ENCODE measurements at regions of chr9 and their contacts with region 1.

Region 1: DNA sequence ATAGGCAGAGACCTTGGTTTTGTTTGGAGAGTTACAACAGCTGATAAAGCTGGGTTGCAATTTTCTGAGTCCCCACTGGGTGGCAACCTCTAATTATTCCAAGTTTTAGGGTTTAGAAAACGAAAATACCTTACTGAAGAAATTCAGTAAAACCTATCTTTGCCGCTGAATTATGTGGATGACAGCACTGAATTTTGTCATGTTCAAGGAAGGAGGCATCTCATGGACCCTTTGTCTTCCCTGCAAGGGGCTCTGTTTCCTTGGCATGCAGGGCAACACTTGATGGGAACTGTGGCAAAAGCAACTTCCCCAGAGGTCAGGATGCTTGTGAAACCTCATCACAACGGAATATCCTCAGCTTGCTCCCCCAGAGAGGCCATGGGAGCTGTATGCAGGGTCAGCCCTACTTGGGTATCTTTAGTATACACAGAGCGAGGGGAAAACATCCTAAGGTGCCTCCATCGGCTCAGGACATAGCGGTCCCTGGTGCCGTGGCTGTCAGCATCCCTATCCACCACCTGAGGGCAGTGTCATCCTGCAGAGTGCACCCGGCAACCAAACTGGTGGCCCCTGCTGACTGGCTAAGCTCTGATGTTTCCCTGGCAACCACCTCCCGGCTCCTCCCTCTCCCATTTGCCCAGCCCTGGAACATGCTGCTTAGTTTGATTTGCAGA is 123.1 kb downstream of the RXRA start:
- DNase-seq: peak; percentile 95
- H3K4me3 ChIP-seq: no peak overlapping the region
- H3K27ac ChIP-seq: no peak overlapping the region
- H3K4me1 ChIP-seq: peaks cover 7% of the 10 kb centered on the region
- H3K27me3 ChIP-seq: no peaks in the 10 kb centered on the region
- CTCF ChIP-seq: peak; percentile 90

Region 2: DNA sequence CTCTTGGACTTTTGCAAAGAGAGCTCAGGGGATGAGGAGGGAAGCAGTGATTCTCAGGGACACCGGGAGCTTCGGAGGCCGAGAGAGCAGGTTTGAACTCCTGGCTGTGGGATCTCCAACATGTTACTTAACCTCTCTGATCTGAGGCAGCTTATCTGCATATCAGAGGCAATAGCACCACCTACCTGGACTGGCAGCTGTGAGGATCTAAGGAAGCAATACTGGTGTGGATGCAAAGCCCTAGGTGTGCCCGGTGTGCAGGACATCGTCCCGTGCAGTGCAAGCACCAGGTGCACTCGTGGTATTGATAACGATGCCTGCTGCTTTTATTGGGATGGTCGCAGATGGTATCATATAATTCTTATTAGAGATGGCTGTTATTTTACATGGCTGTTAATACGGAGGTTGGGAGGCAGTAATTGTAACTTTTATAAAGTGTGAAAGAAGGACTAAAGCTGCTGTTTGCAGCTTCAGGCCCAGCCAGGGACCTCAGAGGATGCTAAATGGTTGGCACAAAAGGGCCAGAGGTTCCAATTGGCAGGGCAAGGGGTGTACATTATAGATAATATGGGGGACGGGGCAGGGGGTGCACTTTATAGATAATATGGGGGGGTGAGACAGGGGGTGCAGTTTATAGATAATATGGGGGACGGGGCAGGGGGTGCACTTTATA is 207.1 kb after region 1 on chr9:
- CTCF ChIA-PET with region 1: no interaction called
- POLR2A ChIA-PET with region 1: no interaction called
- intact Hi-C with region 1: loop called (anchors 2 kb)
- DNase-seq: no peak
- H3K4me3 ChIP-seq: no peak overlapping the region
- H3K27ac ChIP-seq: no peak overlapping the region
- H3K4me1 ChIP-seq: no peaks in the 10 kb centered on the region
- H3K27me3 ChIP-seq: no peaks in the 10 kb centered on the region
- CTCF ChIP-seq: peak; percentile 23; the same call in 1 of the 2 replicates

Region 3: GRCh38 chr9:134738869-134739659 is 289.7 kb after region 1 on chr9:
- CTCF ChIA-PET with region 1: interaction called, 14 read pairs
- POLR2A ChIA-PET with region 1: no interaction called
- intact Hi-C with region 1: loop called (anchors 1 kb)
- DNase-seq: peak; percentile 74
- H3K4me3 ChIP-seq: no peak overlapping the region
- H3K27ac ChIP-seq: no peak overlapping the region
- H3K4me1 ChIP-seq: no peaks in the 10 kb centered on the region
- H3K27me3 ChIP-seq: no peaks in the 10 kb centered on the region
- CTCF ChIP-seq: peak; percentile 85

Region 4: DNA sequence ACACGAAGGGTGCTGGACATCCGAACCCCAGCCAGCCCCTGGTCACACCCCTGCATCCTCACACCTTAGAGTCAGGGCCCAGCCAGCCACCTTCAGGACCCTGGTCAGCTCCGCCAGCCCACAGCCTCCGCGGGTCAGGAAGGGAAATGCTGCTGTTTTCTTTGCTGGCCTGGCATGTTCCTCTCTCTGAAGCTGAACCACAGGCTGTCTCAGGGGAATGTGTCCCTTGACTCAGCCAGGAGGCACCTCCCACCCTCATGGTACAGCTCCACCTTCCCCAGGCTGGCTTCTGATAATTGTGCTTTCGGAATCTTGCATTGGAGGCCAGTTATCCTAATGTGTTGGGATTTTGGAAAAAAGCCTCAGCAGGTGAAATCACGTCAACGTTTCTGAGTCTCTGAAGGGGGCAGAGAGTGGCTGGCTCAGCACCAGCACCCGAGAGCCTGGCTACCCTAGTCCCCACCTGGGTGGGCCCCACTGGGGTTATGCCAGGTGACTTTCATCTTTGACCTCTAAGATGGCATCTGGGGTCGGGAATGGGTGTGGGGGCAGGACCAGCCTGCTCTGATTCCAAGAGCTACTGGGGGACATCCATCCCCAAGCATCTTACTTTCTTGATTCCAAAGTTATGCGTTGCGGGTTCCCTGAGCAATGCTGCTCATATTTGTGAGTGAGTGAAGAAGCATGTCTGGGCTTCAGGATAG is 628.3 kb after region 1 on chr9:
- CTCF ChIA-PET with region 1: no interaction called
- POLR2A ChIA-PET with region 1: no interaction called
- intact Hi-C with region 1: loop called (anchors 10 kb)
- DNase-seq: peak; percentile 58
- H3K4me3 ChIP-seq: no peak overlapping the region
- H3K27ac ChIP-seq: no peak overlapping the region
- H3K4me1 ChIP-seq: peaks cover 11% of the 10 kb centered on the region
- H3K27me3 ChIP-seq: no peaks in the 10 kb centered on the region
- CTCF ChIP-seq: no peak

Measured in A673 (cell line).